Activated CD4-positive, alpha-beta memory T cell treated with anti-CD3 and anti-CD28 coated beads for 36 hours (primary cell): ENCODE measurements at regions of chr17 and their contacts with region 1.

Region 1: GRCh38 chr17:49997791-49998703 is 3.0 kb upstream of the DLX3 start:
- DNase-seq: peak; percentile 89
- H3K4me3 Mint-ChIP-seq: no peak overlapping the region
- H3K27ac Mint-ChIP-seq: no peak overlapping the region
- H3K4me1 Mint-ChIP-seq: peaks cover 22% of the 10 kb centered on the region
- H3K27me3 Mint-ChIP-seq: peaks cover 70% of the 10 kb centered on the region

Region 2: DNA sequence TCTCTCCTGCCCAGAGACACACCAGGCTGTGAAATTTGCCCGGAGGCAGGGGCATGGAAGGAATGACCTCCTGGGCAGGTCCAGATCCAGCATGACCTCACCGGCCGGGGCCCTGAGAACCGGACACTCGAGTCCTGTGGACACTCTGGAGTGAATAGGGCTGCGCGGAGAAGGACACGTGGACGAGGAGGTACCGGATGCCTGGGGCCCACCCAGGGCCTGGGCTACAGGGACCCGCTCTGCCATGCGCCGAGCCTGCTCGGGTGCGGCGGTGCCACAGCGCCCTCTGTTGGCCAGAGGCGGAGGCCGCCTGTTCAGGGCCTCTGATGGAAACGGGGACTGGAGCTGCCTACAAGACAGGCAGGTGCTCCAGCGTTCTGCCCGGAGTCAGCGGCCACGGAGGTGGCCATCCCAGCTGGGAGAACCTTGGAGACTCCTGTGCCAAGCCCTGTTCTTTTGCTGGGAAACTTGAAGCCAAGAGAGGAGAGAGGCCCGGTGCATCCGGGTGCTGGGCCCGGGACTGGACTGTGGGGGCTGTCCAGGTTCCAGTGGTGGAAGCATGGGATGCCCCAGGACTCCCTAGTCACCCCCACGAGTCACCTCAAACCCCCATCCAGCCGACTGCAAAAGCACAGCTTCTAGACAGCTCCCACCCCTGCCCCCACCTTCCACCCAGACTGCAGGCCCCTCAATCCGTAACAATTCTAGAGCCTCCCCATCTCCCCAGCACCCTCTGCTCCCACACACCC is 441.6 kb before region 1 on chr17:
- CTCF ChIA-PET with region 1: interaction called, 24 read pairs
- POLR2A ChIA-PET with region 1: no interaction called
- intact Hi-C with region 1: no loop called
- DNase-seq: peak; percentile 89
- H3K4me3 Mint-ChIP-seq: no peak overlapping the region
- H3K27ac Mint-ChIP-seq: no peak overlapping the region
- H3K4me1 Mint-ChIP-seq: peaks cover 5% of the 10 kb centered on the region
- H3K27me3 Mint-ChIP-seq: peaks cover 3% of the 10 kb centered on the region

Region 3: DNA sequence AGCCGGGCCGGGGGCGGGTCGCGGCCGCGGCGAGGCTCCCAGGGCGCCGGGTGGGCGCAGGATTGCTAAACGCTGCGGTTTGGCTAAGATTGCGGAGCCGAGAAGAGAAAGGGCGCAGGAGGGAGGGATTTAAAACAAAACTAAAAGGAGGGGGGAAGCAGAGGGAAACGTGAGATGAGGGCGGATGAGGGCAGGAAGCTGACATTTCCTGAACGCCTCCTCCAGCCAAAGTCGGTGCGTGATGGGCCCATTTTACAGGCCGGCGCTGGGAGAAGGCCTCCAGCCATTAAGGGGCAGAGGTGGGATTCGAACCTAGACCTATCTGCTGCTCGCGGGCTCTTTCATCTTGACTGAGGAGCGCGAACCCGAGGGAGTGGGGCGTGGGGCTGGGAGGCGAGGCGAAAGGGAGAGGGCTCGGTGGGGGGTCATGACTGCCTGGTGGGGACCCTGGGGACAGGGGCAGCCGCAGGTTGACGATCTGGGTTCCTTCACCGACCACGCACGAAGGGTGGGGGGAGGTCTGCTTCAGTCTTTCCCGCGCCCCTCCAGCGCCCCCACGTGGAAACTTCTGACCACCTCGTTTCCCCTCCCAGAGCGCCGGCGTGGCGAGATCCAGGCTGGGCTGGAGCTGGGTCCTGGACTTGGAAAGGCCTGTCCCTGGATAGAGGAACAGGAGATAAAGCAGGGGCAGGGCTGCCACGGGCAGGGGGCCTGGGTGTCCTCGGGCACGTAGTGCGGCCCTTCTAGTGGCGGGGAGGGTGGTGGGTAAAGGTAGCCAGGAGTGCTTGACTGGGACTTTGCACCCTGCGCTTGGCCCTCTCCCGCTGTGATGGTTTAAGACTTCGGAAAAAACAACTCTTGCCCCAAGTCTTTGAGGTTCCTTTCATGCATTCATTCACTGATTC is 146.4 kb before region 1 on chr17:
- CTCF ChIA-PET with region 1: interaction called, 222 read pairs
- POLR2A ChIA-PET with region 1: no interaction called
- intact Hi-C with region 1: no loop called
- DNase-seq: peak; percentile 76
- H3K4me3 Mint-ChIP-seq: peak overlapping the region; percentile 76
- H3K27ac Mint-ChIP-seq: peak overlapping the region; percentile 73
- H3K4me1 Mint-ChIP-seq: peaks cover 9% of the 10 kb centered on the region
- H3K27me3 Mint-ChIP-seq: no peaks in the 10 kb centered on the region

Region 4: GRCh38 chr17:49899191-49899485 is 98.9 kb before region 1 on chr17:
- CTCF ChIA-PET with region 1: interaction called, 48 read pairs
- POLR2A ChIA-PET with region 1: no interaction called
- intact Hi-C with region 1: no loop called
- DNase-seq: no peak
- H3K4me3 Mint-ChIP-seq: no peak overlapping the region
- H3K27ac Mint-ChIP-seq: no peak overlapping the region
- H3K4me1 Mint-ChIP-seq: no peaks in the 10 kb centered on the region
- H3K27me3 Mint-ChIP-seq: peaks cover 50% of the 10 kb centered on the region

Region 5: GRCh38 chr17:49926886-49927285 is 71.2 kb before region 1 on chr17:
- CTCF ChIA-PET with region 1: interaction called, 19 read pairs
- POLR2A ChIA-PET with region 1: no interaction called
- intact Hi-C with region 1: no loop called
- DNase-seq: no peak
- H3K4me3 Mint-ChIP-seq: no peak overlapping the region
- H3K27ac Mint-ChIP-seq: no peak overlapping the region
- H3K4me1 Mint-ChIP-seq: no peaks in the 10 kb centered on the region
- H3K27me3 Mint-ChIP-seq: peaks cover 30% of the 10 kb centered on the region

Region 6: DNA sequence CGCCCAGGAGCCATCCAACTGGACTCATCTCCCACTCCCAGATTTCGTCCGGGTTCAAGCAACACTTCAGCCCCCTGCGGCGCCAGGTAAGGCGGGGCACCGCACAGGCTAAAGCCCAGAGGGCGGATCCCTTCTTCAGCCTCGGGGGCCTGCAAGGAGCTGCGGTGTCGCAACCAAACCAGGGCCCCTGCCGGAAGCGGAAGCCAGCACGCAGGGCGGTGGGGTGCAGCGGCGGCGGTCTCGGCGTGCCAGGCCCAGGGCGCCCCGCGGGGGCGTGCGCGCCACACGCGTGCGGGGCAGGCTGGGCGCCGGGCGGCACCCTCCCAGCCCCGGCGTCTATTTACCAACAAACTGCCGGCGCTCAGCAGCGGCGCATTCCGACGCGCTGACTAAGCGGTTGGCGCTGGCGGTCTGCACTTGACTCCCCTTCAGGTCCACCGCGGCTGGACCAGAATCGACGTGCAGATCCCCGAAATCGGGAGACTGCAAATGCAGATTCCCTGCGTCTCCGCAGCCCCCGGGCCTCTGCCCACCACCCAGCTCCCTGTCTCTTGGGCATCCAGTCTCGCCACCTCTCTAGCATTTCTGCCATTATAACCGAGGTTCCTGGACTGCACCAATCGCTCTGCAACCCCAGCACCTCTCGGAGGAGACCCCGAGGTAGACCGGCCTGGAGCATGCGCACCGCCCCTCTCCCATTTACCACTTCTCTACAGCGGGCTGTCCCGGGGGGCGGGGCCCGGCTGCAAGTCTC is 29.5 kb before region 1 on chr17:
- CTCF ChIA-PET with region 1: interaction called, 61 read pairs
- POLR2A ChIA-PET with region 1: no interaction called
- intact Hi-C with region 1: loop called (anchors 2 kb)
- DNase-seq: peak; percentile 81
- H3K4me3 Mint-ChIP-seq: peak overlapping the region; percentile 83
- H3K27ac Mint-ChIP-seq: no peak overlapping the region
- H3K4me1 Mint-ChIP-seq: peaks cover 34% of the 10 kb centered on the region
- H3K27me3 Mint-ChIP-seq: peaks cover 80% of the 10 kb centered on the region

Region 7: DNA sequence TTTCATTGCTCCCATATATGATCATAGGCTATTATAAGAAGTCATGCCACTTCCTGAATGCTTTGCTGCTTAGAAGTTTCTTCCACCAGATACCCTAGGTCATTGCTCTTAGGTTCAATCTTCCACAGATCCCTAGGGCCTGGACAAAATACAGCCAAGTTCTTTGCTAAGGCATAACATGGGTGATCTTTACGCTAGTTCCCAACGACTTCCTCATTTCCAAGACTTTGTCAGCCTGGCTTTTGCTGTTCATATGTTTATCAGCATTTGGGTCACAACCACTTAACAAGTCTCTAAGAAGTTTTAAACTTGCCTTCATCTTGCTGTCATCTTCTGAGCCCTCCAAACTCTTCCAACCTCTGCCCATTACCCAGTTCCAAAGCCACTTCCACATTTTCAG is 17.1 kb after region 1 on chr17:
- CTCF ChIA-PET with region 1: interaction called, 14 read pairs
- POLR2A ChIA-PET with region 1: no interaction called
- intact Hi-C with region 1: no loop called
- DNase-seq: no peak
- H3K4me3 Mint-ChIP-seq: no peak overlapping the region
- H3K27ac Mint-ChIP-seq: no peak overlapping the region
- H3K4me1 Mint-ChIP-seq: no peaks in the 10 kb centered on the region
- H3K27me3 Mint-ChIP-seq: peaks cover 21% of the 10 kb centered on the region

Region 8: GRCh38 chr17:50037321-50038071 is 39.4 kb after region 1 on chr17:
- CTCF ChIA-PET with region 1: no interaction called
- POLR2A ChIA-PET with region 1: no interaction called
- intact Hi-C with region 1: no loop called
- DNase-seq: no peak
- H3K4me3 Mint-ChIP-seq: no peak overlapping the region
- H3K27ac Mint-ChIP-seq: no peak overlapping the region
- H3K4me1 Mint-ChIP-seq: no peaks in the 10 kb centered on the region
- H3K27me3 Mint-ChIP-seq: peaks cover 2% of the 10 kb centered on the region

Region 9: GRCh38 chr17:50062323-50063121 is 64.5 kb after region 1 on chr17:
- CTCF ChIA-PET with region 1: no interaction called
- POLR2A ChIA-PET with region 1: no interaction called
- intact Hi-C with region 1: no loop called
- DNase-seq: no peak
- H3K4me3 Mint-ChIP-seq: no peak overlapping the region
- H3K27ac Mint-ChIP-seq: no peak overlapping the region
- H3K4me1 Mint-ChIP-seq: peaks cover 4% of the 10 kb centered on the region
- H3K27me3 Mint-ChIP-seq: no peaks in the 10 kb centered on the region

Region 10: DNA sequence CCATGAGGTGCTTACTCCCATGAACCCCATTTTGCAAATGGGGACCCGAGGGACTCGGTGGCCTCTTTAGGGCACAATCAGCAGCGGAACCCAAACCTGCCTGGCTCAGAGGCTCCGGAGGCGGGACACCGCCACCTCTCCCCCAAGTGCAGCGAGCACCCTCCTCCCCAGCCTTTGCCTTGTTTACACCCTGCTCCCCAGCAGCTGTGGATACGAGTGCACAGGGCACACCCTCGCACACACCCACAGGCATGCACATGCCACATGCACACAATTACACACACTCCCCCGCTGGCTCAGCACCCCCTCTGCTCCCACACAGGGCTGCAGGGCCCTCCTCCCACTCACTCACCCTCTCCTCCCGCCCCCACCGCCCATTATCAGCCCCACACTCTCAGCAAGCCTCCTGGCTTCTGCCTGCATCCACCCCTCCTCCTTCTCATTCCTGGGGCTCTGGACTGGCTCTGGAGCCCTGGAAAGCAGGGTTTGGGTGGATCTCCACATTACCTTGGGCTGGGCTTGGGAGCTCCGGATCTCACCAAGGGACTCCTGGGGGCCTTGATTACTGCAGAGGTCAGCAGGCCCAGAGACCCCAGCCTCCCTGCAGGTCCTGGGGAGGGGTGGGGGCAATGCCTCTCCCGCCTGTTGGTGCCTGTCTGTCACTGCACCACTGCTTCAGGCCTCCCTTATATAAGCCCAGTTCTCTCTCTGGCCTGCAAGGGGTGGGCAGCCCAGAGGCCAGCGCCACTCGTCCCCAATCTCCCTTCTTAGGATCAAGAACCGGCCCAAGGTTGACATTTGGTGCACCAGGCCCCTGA is 103.5 kb after region 1 on chr17:
- CTCF ChIA-PET with region 1: no interaction called
- POLR2A ChIA-PET with region 1: no interaction called
- intact Hi-C with region 1: no loop called
- DNase-seq: no peak
- H3K4me3 Mint-ChIP-seq: no peak overlapping the region
- H3K27ac Mint-ChIP-seq: no peak overlapping the region
- H3K4me1 Mint-ChIP-seq: peaks cover 8% of the 10 kb centered on the region
- H3K27me3 Mint-ChIP-seq: no peaks in the 10 kb centered on the region